ENCODE measurements at regions of chr19 and their contacts with region 1.

Region 1: GRCh38 chr19:10388957-10389356 is 8.6 kb upstream of the TYK2 start:
- DNase-seq: peak; percentile 88
- ATAC-seq: peak; percentile 63 to 81

Region 2: GRCh38 chr19:10269333-10270179 is 119.4 kb before region 1 on chr19:
- intact Hi-C with region 1: loop called (anchors 1 to 2 kb)
- DNase-seq: peak; percentile 92
- ATAC-seq: peak; percentile 80 to 83

Region 3: GRCh38 chr19:10346509-10346908 is 42.4 kb before region 1 on chr19:
- intact Hi-C with region 1: no loop called
- DNase-seq: no peak
- ATAC-seq: peak; percentile 59 to 71

Measured in left cardiac atrium (tissue), 4 donors.